Posterior vena cava (tissue), 2 donors: ENCODE measurements at regions of chr14 and their contacts with region 1.

Region 1: DNA sequence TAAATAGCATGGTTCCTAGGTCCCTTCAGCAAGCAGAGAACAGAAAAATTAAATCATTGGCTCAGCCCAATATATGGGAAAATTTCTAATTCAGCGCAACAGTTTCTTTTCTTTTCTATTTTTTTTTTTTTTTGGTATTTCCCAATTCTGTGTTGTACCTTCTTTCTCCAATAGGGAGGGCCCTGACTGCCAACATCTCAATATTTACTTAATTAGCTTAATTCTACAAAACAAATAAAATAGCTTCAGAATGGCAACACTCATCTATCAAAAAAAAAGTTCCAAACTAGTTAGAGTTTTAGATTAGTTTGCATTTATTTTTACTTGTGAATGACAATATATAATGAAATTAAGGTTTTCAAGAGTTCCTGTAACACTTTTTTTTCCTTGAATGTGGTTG is 939.9 kb upstream of the LRFN5 start:
- DNase-seq: no peak

Region 2: GRCh38 chr14:40656311-40656710 is 10.5 kb before region 1 on chr14:
- intact Hi-C with region 1: loop called in 1 of 2 experiments (anchors 1 kb)
- DNase-seq: no peak

Region 3: GRCh38 chr14:40713387-40713786 is 46.6 kb after region 1 on chr14:
- intact Hi-C with region 1: no loop called
- DNase-seq: no peak

Region 4: GRCh38 chr14:40870252-40870651 is 203.5 kb after region 1 on chr14:
- intact Hi-C with region 1: no loop called
- DNase-seq: no peak